WTC11 (cell line): ENCODE measurements at regions of chr12 and their contacts with region 1.

Region 1: DNA sequence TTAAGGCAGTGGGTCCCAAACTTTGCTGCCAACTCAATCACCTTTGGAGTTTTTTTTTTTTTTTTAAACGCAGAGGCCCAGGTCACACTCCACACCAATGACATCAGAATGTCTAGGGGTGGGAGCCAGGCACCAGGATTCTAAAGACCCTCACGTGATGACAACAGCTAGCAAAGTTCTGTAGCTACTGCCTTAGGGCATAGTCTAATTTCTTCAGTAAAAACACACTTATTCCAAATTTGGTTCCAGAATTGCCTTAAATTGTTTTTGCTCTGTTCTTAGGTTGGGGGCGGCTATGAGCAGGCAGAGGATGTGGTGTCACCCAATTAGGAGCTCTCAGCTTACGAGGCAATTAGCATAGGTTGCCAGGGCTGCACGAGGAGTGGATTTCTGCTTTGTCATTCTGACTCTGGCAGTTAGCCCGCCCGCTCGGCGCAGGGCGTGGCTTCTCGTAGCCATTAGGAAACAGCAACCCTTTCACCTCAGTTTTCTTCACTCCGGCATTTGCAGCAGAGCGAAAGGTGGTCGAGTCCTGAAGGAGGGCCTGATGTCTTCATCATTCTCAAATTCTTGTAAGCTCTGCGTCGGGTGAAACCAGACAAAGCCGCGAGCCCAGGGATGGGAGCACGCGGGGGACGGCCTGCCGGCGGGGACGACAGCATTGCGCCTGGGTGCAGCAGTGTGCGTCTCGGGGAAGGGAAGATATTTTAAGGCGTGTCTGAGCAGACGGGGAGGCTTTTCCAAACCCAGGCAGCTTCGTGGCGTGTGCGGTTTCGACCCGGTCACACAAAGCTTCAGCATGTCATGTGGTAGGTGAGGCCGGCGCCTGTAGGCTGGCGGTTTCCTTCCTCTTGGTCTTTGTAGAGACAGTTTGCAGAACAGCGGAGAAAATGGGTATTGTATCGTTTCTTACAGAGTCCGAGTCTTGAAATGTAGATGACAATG is 16.7 kb upstream of the EID3 start:
- DNase-seq: peak; percentile 91
- ATAC-seq: peak; percentile 92
- H3K4me3 Mint-ChIP-seq: peak overlapping the region; percentile 99
- H3K27ac Mint-ChIP-seq: peak overlapping the region; percentile 99
- H3K4me1 Mint-ChIP-seq: peaks cover 29% of the 10 kb centered on the region
- H3K27me3 Mint-ChIP-seq: no peaks in the 10 kb centered on the region; the same call in 1 of the 2 replicates
- CTCF ChIP-seq: no peak

Region 2: DNA sequence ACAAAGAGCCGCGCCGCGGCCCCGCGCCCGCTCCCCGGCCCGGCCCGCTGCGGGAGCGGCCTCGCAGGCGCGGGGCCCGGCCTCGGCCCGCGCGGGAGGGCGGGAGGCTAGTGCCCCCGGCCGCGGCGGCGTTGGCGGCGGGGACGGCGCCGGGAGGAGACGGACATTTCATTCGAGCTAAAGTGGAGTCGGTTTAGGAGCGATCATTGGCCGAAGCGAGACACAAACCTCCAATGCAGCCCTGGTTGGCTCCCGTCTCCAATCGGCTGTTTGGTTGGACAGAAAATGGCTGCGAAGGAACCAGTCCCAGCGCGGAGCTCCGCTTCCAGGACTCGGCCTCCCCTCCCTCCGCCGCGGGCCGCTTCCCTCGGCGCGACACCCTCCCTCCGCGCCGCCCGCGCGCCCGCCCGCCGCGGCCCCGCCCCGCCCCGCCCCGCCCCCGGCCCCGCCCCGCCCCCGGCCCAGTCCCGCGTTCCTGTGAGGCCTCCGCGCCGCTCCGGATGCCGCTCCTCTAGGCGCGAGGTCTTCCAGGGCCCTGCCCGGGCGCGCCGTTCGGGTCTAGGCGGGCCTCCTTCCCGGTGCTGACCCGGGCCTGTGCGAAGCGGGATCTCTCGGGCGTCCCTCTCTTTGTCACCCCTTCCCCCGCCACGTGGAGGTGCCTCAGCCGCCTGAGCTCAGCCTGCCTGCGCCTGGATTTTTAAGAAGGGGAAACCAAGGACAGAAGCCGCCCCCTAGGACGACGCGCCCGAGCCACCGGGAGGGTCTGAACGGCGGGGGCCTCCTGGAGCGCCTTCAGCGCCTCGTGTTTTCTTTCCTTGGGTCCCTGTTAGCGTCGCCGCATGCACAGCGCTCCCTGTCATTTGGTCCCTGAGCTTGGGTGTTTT is 148.7 kb before region 1 on chr12 and contains the start of gene NFYB:
- CTCF ChIA-PET with region 1: interaction called, 3 read pairs
- POLR2A ChIA-PET with region 1: interaction called, 16 read pairs
- DNase-seq: peak; percentile 88
- ATAC-seq: peak; percentile 93
- H3K4me3 Mint-ChIP-seq: peak within 1 kb of the TSS; percentile 84
- H3K27ac Mint-ChIP-seq: peak within 1 kb of the TSS; percentile 82
- H3K4me1 Mint-ChIP-seq: peaks cover 20% of the 10 kb centered on the region
- H3K27me3 Mint-ChIP-seq: peaks cover 29% of the 10 kb centered on the region
- CTCF ChIP-seq: no peak
- total RNA-seq, gene NFYB: 33.0 to 36.0 TPM (median 34.6 TPM) in 3 replicates

Region 3: GRCh38 chr12:104250366-104251125 is 36.3 kb before region 1 on chr12:
- CTCF ChIA-PET with region 1: no interaction called
- POLR2A ChIA-PET with region 1: no interaction called
- DNase-seq: no peak
- ATAC-seq: no peak
- H3K4me3 Mint-ChIP-seq: no peak overlapping the region
- H3K27ac Mint-ChIP-seq: no peak overlapping the region
- H3K4me1 Mint-ChIP-seq: peaks cover 14% of the 10 kb centered on the region
- H3K27me3 Mint-ChIP-seq: no peaks in the 10 kb centered on the region
- CTCF ChIP-seq: no peak

Region 4: GRCh38 chr12:104303538-104304151 is 16.8 kb after region 1 on chr12 and contains the start of gene EID3:
- CTCF ChIA-PET with region 1: interaction called, 7 read pairs
- POLR2A ChIA-PET with region 1: interaction called, 34 read pairs
- DNase-seq: peak; percentile 91
- ATAC-seq: peak; percentile 91
- H3K4me3 Mint-ChIP-seq: peak within 1 kb of the TSS; percentile 75
- H3K27ac Mint-ChIP-seq: peak within 1 kb of the TSS; percentile 91
- H3K4me1 Mint-ChIP-seq: peaks cover 70% of the 10 kb centered on the region
- H3K27me3 Mint-ChIP-seq: no peaks in the 10 kb centered on the region; the same call in 1 of the 2 replicates
- CTCF ChIP-seq: no peak
- total RNA-seq, gene EID3: 2.0 to 3.2 TPM (median 2.5 TPM) in 3 replicates

Region 5: GRCh38 chr12:104319918-104320626 is 33.3 kb after region 1 on chr12:
- CTCF ChIA-PET with region 1: no interaction called
- POLR2A ChIA-PET with region 1: no interaction called
- DNase-seq: no peak
- ATAC-seq: no peak
- H3K4me3 Mint-ChIP-seq: no peak overlapping the region
- H3K27ac Mint-ChIP-seq: no peak overlapping the region
- H3K4me1 Mint-ChIP-seq: no peaks in the 10 kb centered on the region
- H3K27me3 Mint-ChIP-seq: no peaks in the 10 kb centered on the region
- CTCF ChIP-seq: no peak